A549 (cell line): ENCODE measurements at regions of chr19 and their contacts with region 1.

Region 1: DNA sequence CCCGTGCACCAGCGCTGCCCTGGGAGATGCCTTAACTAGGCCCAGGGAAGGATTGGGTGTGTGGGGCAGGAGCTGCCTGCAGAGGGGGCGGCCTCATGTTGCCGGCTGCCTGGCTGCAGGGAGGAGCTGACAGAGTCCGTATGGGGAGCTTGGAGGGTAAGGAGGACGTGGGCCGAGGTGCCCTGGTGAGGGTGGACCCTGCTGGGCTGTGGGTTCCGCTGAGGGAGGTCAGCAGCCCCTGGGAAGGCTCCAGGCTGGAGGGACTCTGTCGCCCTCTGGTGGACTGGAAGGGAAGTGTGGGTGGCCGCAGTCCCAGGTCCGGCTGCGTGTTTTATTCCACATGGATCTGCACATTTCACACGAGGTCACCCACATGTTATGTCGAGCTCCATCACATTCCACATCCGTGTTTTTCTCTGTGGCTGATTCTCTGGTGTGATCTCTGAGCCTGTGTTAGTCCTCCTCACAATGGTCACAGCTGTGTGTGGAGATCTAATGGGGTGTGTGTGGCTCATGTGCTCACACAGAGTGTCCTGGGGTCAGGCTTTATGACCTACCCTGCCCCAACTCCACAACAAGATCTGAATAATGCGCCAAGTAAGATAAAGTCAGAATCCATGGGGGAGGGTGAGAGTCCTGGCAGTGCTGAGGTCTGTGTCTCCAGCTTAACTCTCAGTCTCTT is 1.8 kb upstream of the CEACAM8 start:
- DNase-seq: peak; percentile 36 to 64
- ATAC-seq: peak; percentile 44 to 90; a peak in 5 of 6 replicates
- H3K4me3 ChIP-seq: no peak overlapping the region
- H3K27ac ChIP-seq: no peak overlapping the region
- H3K4me1 ChIP-seq: no peaks in the 10 kb centered on the region
- CTCF ChIP-seq: peak; percentile 96
- EP300 ChIP-seq: no peak
- POLR2A ChIP-seq: no peak
- RAD21 ChIP-seq: peak; percentile 70 to 77

Region 2: DNA sequence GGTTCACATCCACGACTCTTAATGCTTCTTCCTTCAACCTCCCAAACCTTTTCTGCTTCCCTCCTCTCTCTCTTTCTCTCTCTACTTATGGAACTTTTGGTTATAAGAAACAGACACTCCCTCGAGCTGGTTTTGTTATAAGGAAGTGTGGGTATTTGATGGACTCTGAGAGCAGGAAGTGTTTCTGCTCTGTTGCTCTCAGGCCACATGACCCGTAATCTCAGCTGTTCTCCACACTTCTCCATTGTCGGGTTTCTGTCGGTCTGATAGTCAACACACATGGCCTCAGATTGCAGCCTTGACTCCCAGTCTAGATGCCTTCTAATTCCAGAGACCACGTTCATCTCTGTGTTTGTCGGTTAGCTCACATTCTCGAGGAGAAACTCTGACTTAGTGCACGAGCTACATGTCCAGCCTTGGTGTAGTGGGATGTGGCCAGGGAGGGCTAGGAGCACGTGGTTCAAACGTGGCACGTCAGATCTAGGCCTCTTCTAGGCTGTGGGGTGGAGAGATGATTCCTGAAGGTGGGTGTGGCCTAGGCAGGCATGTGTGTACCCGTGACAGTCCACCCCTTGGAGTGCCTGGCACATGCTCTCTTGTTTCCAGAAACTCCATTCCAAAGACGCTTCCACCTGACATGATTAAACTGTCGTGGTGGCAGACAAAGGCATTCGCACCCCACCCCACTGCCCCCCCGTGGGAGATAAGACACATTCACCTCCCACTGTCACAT is 232.8 kb before region 1 on chr19:
- CTCF ChIA-PET with region 1: no interaction called
- POLR2A ChIA-PET with region 1: no interaction called
- DNase-seq: peak in 1 of 2 experiments; percentile 65
- ATAC-seq: no peak
- H3K4me3 ChIP-seq: no peak overlapping the region
- H3K27ac ChIP-seq: no peak overlapping the region
- H3K4me1 ChIP-seq: no peaks in the 10 kb centered on the region
- CTCF ChIP-seq: no peak
- EP300 ChIP-seq: no peak
- POLR2A ChIP-seq: no peak; the same call in 1 of the 2 replicates
- RAD21 ChIP-seq: no peak

Region 3: GRCh38 chr19:42440357-42441048 is 156.0 kb before region 1 on chr19:
- CTCF ChIA-PET with region 1: interaction called, 12 read pairs
- POLR2A ChIA-PET with region 1: no interaction called
- DNase-seq: peak; percentile 87 to 95
- ATAC-seq: peak; percentile 73 to 85
- H3K4me3 ChIP-seq: no peak overlapping the region
- H3K27ac ChIP-seq: no peak overlapping the region
- H3K4me1 ChIP-seq: peaks cover 30% of the 10 kb centered on the region
- CTCF ChIP-seq: peak; percentile 99
- EP300 ChIP-seq: no peak
- POLR2A ChIP-seq: no peak
- RAD21 ChIP-seq: peak; percentile 38 to 50

Region 4: GRCh38 chr19:42474743-42475142 is 121.8 kb before region 1 on chr19:
- CTCF ChIA-PET with region 1: interaction called, 10 read pairs
- POLR2A ChIA-PET with region 1: no interaction called
- DNase-seq: no peak
- ATAC-seq: no peak
- H3K4me3 ChIP-seq: no peak overlapping the region
- H3K27ac ChIP-seq: no peak overlapping the region
- H3K4me1 ChIP-seq: peaks cover 12% of the 10 kb centered on the region
- CTCF ChIP-seq: no peak
- EP300 ChIP-seq: no peak
- POLR2A ChIP-seq: no peak
- RAD21 ChIP-seq: no peak

Region 5: DNA sequence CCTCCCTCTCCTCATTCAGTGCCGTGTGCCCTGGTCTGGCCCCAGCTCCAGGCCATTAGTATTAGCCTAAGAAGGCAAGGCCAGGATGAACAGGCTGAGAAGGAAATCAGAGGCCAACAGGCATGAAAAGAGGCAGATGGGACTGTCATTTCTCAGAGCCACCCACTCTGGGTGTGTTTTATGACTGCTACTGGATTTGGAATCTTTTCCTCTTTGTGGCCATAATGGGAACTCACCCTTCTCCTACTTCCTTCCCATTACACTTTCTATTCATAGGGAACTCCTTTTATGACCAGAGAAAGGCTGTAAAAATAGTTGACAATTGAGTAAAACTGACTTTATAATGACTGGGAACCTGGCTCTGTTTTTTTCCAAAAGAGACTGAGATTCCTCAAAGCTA is 19.5 kb before region 1 on chr19:
- CTCF ChIA-PET with region 1: interaction called, 83 read pairs
- POLR2A ChIA-PET with region 1: no interaction called
- DNase-seq: no peak
- ATAC-seq: no peak; a peak in 1 of 6 replicates
- H3K4me3 ChIP-seq: no peak overlapping the region
- H3K27ac ChIP-seq: no peak overlapping the region
- H3K4me1 ChIP-seq: no peaks in the 10 kb centered on the region
- CTCF ChIP-seq: no peak
- EP300 ChIP-seq: no peak
- POLR2A ChIP-seq: no peak
- RAD21 ChIP-seq: no peak

Region 6: GRCh38 chr19:42606660-42607351 is 10.3 kb after region 1 on chr19:
- CTCF ChIA-PET with region 1: interaction called, 70 read pairs
- POLR2A ChIA-PET with region 1: no interaction called
- DNase-seq: peak; percentile 80 to 88
- ATAC-seq: peak; percentile 75 to 98
- H3K4me3 ChIP-seq: no peak overlapping the region
- H3K27ac ChIP-seq: no peak overlapping the region
- H3K4me1 ChIP-seq: no peaks in the 10 kb centered on the region
- CTCF ChIP-seq: peak; percentile 87
- EP300 ChIP-seq: no peak
- POLR2A ChIP-seq: peak; percentile 22; the same call in 1 of the 2 replicates
- RAD21 ChIP-seq: peak; percentile 75 to 86

Region 7: DNA sequence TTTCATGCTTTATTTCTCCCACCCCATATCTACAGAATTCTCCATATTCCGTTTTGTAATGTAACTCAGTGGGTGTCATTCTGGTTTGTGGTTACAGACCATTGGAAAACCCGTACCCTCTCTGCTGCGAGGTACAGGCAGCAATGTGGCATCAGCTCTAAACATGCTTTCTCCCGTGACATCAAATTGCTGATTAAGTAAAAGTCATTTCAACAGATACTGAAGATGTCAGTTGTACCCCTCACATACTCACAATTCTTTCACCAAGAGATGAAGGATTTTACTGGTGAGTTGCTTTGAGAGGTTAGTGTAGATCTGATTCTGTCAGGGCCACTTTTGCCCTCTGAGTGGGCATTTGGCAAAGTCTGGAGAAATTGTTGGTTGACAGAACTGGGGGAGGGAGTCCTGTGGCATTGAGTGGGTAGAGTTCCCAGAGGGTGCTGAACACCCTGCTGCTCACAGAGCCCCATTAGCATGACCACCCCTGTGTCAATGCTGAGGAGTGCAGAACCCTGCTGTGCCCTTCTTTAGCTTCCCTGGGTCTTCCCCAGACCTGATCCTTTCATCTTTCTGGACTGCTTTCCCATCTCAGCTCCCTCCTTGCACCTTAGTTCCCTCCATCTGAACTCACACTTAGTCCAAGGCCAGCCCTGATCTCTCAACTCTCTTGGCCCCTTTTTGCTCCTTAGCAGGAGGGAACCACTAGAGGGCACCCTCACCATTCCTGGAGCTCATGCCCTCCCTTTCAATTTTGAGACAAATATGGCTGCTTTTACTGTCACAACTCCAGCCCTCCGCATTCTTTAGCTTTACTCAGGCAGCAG is 38.1 kb after region 1 on chr19:
- CTCF ChIA-PET with region 1: interaction called, 17 read pairs
- POLR2A ChIA-PET with region 1: no interaction called
- DNase-seq: peak; percentile 71 to 73
- ATAC-seq: peak; percentile 68 to 92
- H3K4me3 ChIP-seq: no peak overlapping the region
- H3K27ac ChIP-seq: no peak overlapping the region
- H3K4me1 ChIP-seq: no peaks in the 10 kb centered on the region
- CTCF ChIP-seq: peak; percentile 88
- EP300 ChIP-seq: no peak
- POLR2A ChIP-seq: no peak
- RAD21 ChIP-seq: peak; percentile 79 to 94